ENCODE measurements at regions of chr2 and their contacts with region 1.

Region 1: GRCh38 chr2:86440631-86441391 is at the start of gene KDM3A:
- DNase-seq: peak; percentile 100
- ATAC-seq: peak; percentile 96 to 97
- H3K4me3 ChIP-seq: peak within 1 kb of the TSS; percentile 99
- H3K27ac ChIP-seq: peak within 1 kb of the TSS; percentile 100
- H3K4me1 ChIP-seq: peaks cover 5% of the 10 kb centered on the region
- H3K27me3 ChIP-seq: no peaks in the 10 kb centered on the region
- total RNA-seq, gene KDM3A: 41.3 to 54.3 (median 47.1) TPM

Region 2: GRCh38 chr2:86195055-86195807 is 245.6 kb before region 1 on chr2 and contains the start of gene IMMT:
- intact Hi-C with region 1: loop called in 1 of 4 experiments (anchors 10 kb)
- DNase-seq: peak; percentile 98 to 99 (median 99)
- ATAC-seq: peak; percentile 96
- H3K4me3 ChIP-seq: peak within 1 kb of the TSS; percentile 76
- H3K27ac ChIP-seq: peak within 1 kb of the TSS; percentile 99
- H3K4me1 ChIP-seq: peaks cover 8% of the 10 kb centered on the region
- H3K27me3 ChIP-seq: no peaks in the 10 kb centered on the region
- total RNA-seq, gene IMMT: 188 to 204 (median 201) TPM

Region 3: GRCh38 chr2:86617153-86617552 is 176.3 kb after region 1 on chr2:
- intact Hi-C with region 1: no loop called
- DNase-seq: no peak
- ATAC-seq: no peak
- H3K4me3 ChIP-seq: no peak overlapping the region
- H3K27ac ChIP-seq: no peak overlapping the region
- H3K4me1 ChIP-seq: peaks cover 4% of the 10 kb centered on the region
- H3K27me3 ChIP-seq: no peaks in the 10 kb centered on the region

Measured in right cardiac atrium (tissue), 5 donors.